ENCODE measurements at regions of chr5 and their contacts with region 1.

Region 1: GRCh38 chr5:159427180-159428012 is 97.1 kb upstream of the IL12B start:
- DNase-seq: peak; percentile 59
- H3K4me3 Mint-ChIP-seq: peak overlapping the region; percentile 9
- H3K27ac Mint-ChIP-seq: peak overlapping the region; percentile 8
- H3K4me1 Mint-ChIP-seq: peaks cover 40% of the 10 kb centered on the region
- H3K27me3 Mint-ChIP-seq: peaks cover 23% of the 10 kb centered on the region

Region 2: GRCh38 chr5:159336991-159337955 is 90.1 kb before region 1 on chr5:
- intact Hi-C with region 1: loop called (anchors 5 kb)
- DNase-seq: peak; percentile 88
- H3K4me3 Mint-ChIP-seq: peak overlapping the region; percentile 48
- H3K27ac Mint-ChIP-seq: peak overlapping the region; percentile 76
- H3K4me1 Mint-ChIP-seq: peaks cover 64% of the 10 kb centered on the region
- H3K27me3 Mint-ChIP-seq: peaks cover 4% of the 10 kb centered on the region

Measured in activated CD4-positive, alpha-beta T cell treated with anti-CD3 and anti-CD28 coated beads, Interleukin-2, amount 10 ng/mL, durations not matched to agents 24 days and 14 days (primary cell).